ENCODE measurements at regions of chr12 and their contacts with region 1.

Region 1: GRCh38 chr12:53079226-53080117 is at the start of gene SPRYD3:
- DNase-seq: peak; percentile 95 to 98 (median 96)
- ATAC-seq: peak; percentile 94
- H3K4me3 ChIP-seq: peak within 1 kb of the TSS; percentile 66 to 92
- H3K4me3 Mint-ChIP-seq: peak within 1 kb of the TSS; percentile 92
- H3K27ac ChIP-seq: peak within 1 kb of the TSS; percentile 75 to 89
- H3K27ac Mint-ChIP-seq: peak within 1 kb of the TSS; percentile 96
- H3K4me1 ChIP-seq: peaks cover 13% of the 10 kb centered on the region
- H3K4me1 Mint-ChIP-seq: peaks cover 41% of the 10 kb centered on the region
- H3K27me3 ChIP-seq: no peaks in the 10 kb centered on the region
- H3K27me3 Mint-ChIP-seq: no peaks in the 10 kb centered on the region
- CTCF ChIP-seq: no peak
- total RNA-seq, gene SPRYD3: 25.1 to 25.6 TPM

Region 2: DNA sequence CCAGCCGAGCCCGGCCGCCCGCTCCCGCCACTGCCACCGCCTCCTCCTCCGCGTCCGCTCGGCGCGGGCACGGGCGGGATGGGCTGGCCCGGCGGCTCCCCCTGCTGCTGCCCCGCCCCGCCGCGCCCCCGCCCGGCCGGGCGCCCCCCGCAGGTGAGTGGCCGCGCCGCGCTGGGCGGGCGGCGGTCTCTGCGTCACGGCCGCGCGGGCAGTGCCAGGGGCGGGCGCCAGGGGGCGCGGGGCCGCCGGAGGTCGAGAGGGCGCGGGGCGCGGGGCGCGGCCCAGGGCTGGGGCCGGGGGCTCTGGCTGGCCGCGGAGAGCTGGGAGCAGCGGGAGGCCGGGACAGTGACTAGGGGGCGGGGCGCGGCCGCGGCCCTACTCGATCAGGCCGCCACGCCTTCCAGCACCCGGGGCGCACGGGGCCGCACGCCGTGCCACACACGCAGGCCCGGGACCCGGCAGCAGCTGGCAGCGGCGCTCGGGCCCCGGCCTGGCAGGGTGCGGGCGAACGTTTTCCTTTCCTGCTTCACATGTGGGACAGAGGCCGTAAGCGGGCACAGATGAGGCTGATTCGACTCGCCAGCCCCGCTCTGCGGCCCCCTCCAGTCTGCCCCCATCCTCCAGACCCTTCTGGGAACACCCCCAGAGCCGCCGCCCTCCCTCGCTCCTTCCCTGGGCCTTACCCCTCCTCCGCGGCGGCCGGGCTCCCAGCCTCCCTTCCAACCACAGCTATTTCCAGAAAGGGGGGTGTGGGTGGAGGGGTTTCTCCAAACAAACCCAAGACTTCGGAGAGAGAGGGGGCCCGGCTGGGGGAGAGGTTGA is 32.0 kb before region 1 on chr12:
- CTCF ChIA-PET with region 1: interaction called, 4 read pairs
- POLR2A ChIA-PET with region 1: interaction called, 10 read pairs
- intact Hi-C with region 1: loop called (anchors 2 kb)
- DNase-seq: peak; percentile 45 to 85 (median 65)
- ATAC-seq: peak; percentile 85
- H3K4me3 ChIP-seq: peak overlapping the region; percentile 8 to 85
- H3K4me3 Mint-ChIP-seq: peak overlapping the region; percentile 69
- H3K27ac ChIP-seq: peak overlapping the region in 1 of 2 experiments; percentile 70
- H3K27ac Mint-ChIP-seq: peak overlapping the region; percentile 55
- H3K4me1 ChIP-seq: peaks cover 5% of the 10 kb centered on the region
- H3K4me1 Mint-ChIP-seq: peaks cover 11% of the 10 kb centered on the region
- H3K27me3 ChIP-seq: no peaks in the 10 kb centered on the region
- H3K27me3 Mint-ChIP-seq: no peaks in the 10 kb centered on the region
- CTCF ChIP-seq: no peak

Region 3: DNA sequence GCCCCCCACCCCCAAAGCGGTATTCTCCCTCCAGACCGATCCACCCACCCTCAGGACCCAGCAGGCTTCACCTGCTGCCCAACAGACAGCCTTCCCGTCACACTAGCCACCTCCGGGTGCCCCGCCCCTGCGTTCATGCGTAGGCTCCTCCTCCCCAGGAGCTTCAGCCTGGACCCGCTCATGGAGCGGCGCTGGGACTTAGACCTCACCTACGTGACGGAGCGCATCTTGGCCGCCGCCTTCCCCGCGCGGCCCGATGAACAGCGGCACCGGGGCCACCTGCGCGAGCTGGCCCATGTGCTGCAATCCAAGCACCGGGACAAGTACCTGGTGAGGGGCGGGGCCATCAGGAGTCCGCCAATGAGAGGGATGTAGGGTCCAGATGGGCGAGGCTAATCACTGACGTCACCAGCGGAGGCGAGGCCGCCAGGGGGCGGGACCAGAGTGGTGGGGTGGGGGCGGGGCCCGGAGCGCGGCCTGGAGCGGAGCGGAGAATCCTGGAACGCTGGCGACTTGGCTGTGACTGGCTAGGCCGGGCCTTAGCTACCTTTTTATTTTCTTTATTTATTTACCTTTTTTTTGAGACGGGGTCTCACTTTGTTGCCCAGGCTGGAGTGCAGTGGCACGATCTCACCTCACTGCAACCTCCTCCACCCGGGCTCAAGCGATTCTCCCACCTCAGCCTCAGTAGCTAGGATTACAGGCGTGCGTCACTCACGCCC is 25.2 kb before region 1 on chr12:
- CTCF ChIA-PET with region 1: interaction called, 3 read pairs
- POLR2A ChIA-PET with region 1: interaction called, 11 read pairs
- intact Hi-C with region 1: loop called (anchors 1 to 2 kb)
- DNase-seq: peak; percentile 81 to 97 (median 93)
- ATAC-seq: peak; percentile 92
- H3K4me3 ChIP-seq: peak overlapping the region; percentile 82 to 94
- H3K4me3 Mint-ChIP-seq: peak overlapping the region; percentile 94
- H3K27ac ChIP-seq: peak overlapping the region; percentile 51 to 57
- H3K27ac Mint-ChIP-seq: peak overlapping the region; percentile 91
- H3K4me1 ChIP-seq: peaks cover 7% of the 10 kb centered on the region
- H3K4me1 Mint-ChIP-seq: peaks cover 13% of the 10 kb centered on the region
- H3K27me3 ChIP-seq: no peaks in the 10 kb centered on the region
- H3K27me3 Mint-ChIP-seq: no peaks in the 10 kb centered on the region
- CTCF ChIP-seq: no peak

Region 4: DNA sequence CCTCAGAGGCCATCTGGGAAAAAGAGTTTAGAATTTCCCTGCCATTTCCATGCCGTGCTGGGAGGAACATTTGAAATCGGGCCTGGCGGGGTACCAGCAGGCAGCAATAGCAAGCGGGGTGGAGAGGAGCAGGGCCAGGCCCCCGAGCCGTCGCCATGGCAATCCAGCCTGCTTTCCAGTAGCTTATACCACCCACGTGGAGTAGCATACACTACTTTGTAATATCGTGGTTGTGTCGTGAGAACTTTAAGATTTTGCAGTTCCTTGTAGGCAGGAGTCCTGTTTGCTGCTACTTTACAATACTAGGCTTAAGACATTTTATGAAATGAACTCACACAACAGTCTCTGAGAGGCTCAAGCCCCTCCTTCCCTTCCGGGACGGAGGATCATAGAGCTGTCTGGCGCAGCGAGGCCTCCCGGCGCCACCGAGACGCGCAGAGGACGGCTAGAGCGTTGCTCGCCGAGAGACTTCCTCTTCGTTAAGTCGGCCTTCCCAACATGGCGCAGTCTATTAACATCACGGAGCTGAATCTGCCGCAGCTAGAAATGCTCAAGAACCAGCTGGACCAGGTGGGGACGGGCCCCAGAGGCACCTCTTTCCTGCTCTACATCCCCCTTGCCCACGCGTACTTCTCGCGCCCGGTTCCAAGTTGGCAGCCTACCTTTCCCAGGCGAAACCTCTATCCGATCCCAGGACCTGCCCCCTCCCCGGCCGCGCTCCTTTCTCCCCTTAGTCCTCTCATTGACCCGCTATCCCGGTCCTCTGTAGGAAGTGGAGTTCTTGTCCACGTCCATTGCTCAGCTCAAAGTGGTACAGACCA is 215.8 kb after region 1 on chr12 and contains the start of gene PFDN5:
- CTCF ChIA-PET with region 1: no interaction called
- POLR2A ChIA-PET with region 1: interaction called, 13 read pairs
- intact Hi-C with region 1: no loop called
- DNase-seq: peak; percentile 72 to 95 (median 87)
- ATAC-seq: peak; percentile 92
- H3K4me3 ChIP-seq: peak within 1 kb of the TSS; percentile 75 to 88
- H3K4me3 Mint-ChIP-seq: peak within 1 kb of the TSS; percentile 99
- H3K27ac ChIP-seq: peak within 1 kb of the TSS; percentile 80 to 82
- H3K27ac Mint-ChIP-seq: peak within 1 kb of the TSS; percentile 99
- H3K4me1 ChIP-seq: peaks cover 28% of the 10 kb centered on the region
- H3K4me1 Mint-ChIP-seq: peaks cover 51% of the 10 kb centered on the region
- H3K27me3 ChIP-seq: no peaks in the 10 kb centered on the region
- H3K27me3 Mint-ChIP-seq: no peaks in the 10 kb centered on the region
- CTCF ChIP-seq: no peak
- total RNA-seq, gene PFDN5: 741 to 751 TPM

Region 5: GRCh38 chr12:53684654-53685220 is 605.3 kb after region 1 on chr12:
- CTCF ChIA-PET with region 1: no interaction called
- POLR2A ChIA-PET with region 1: no interaction called
- intact Hi-C with region 1: no loop called
- DNase-seq: no peak
- ATAC-seq: no peak
- H3K4me3 ChIP-seq: no peak overlapping the region
- H3K4me3 Mint-ChIP-seq: no peak overlapping the region
- H3K27ac ChIP-seq: no peak overlapping the region
- H3K27ac Mint-ChIP-seq: no peak overlapping the region
- H3K4me1 ChIP-seq: no peaks in the 10 kb centered on the region
- H3K4me1 Mint-ChIP-seq: no peaks in the 10 kb centered on the region
- H3K27me3 ChIP-seq: no peaks in the 10 kb centered on the region
- H3K27me3 Mint-ChIP-seq: peaks cover 20% of the 10 kb centered on the region
- CTCF ChIP-seq: no peak